Endothelial cell of umbilical vein (primary cell): ENCODE measurements at regions of chr3 and their contacts with region 1.

Region 1: DNA sequence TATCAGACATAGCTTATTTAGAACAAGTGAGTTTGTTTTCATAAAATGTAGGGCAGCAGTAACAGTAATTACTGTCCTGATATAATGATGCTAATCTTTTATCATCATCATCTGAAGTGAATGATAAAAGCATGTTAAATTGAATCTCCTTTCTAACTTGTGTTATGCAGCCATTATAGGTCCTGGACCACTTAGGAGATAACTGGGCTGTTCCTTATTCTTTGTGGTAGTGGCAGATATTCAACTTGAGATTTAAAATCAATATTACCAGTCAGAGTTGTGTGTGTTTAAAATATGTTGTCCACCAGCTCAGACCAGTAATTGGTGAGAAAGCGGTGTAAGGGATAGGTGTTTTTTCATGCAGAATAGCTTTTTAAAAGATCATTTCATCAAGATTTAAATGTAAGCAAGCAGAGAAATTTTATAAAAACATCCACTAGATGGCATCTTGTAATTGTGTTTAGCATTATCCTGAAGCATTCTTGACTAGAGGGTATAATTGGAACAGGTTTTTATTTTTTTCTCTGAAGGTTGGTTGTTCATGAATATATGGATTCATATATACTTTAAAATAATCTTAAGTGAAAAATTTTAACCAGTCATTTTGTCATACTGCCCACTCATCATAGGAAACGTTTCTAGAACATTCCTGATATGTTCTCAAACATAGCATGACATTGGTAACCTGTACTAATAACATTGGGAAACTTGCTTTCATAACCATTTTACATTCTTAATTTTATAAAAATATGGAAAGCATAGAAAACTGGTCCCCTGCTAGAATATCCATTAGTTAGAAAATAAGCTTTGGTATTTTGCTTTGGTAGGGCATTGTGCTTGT is 153.9 kb downstream of the BBX start:
- DNase-seq: peak; percentile 42
- H3K4me3 ChIP-seq: no peak overlapping the region
- H3K27ac ChIP-seq: no peak overlapping the region
- H3K4me1 ChIP-seq: no peaks in the 10 kb centered on the region
- H3K27me3 ChIP-seq: no peaks in the 10 kb centered on the region
- CTCF ChIP-seq: peak; percentile 20 to 31
- POLR2A ChIP-seq: no peak

Region 2: DNA sequence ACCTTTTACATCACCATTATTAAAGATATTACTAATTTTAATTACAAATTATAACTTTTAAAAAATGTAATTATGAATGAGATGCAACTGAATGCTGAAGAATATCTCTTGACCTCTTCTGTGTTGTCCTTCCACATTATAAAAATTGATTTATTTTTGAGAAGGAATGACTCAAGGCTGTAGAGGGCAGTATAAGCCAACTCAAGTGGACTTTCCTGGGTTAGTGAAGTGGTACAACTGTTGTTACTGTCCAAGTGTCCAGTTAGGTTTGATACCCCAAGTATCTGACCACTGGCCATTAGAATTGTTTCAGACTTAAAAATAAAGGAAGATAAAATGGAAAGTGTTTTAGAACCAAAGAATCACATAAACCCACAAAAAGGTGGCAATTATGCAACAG is 102.0 kb before region 1 on chr3:
- CTCF ChIA-PET with region 1: interaction called, 49 read pairs
- POLR2A ChIA-PET with region 1: no interaction called
- dilution Hi-C with region 1: no loop called
- intact Hi-C with region 1: loop called (anchors 5 kb)
- DNase-seq: peak; percentile 66
- H3K4me3 ChIP-seq: no peak overlapping the region
- H3K27ac ChIP-seq: no peak overlapping the region
- H3K4me1 ChIP-seq: no peaks in the 10 kb centered on the region
- H3K27me3 ChIP-seq: no peaks in the 10 kb centered on the region
- CTCF ChIP-seq: peak; percentile 33 to 46
- POLR2A ChIP-seq: no peak

Region 3: DNA sequence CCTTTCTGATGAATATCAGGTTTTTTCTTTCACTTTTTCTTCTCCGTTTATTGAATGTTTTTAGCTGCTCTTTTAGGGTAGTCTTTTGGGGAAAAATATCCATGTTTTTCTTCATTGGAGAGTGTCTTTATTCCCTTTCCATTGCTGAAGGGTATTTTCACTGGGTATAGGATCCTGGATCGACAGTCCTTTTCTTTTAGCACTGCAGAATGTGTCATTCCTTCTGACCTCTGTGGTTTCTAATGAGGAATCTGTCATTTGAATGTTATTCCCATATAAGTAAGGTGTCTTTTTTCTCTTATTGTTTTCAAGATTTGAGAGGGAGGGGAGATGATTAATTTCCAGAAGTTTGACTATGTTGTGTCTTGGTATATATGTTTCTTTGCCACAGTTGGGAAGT is 57.1 kb before region 1 on chr3:
- CTCF ChIA-PET with region 1: no interaction called
- POLR2A ChIA-PET with region 1: no interaction called
- dilution Hi-C with region 1: no loop called
- intact Hi-C with region 1: no loop called
- DNase-seq: no peak
- H3K4me3 ChIP-seq: no peak overlapping the region
- H3K27ac ChIP-seq: no peak overlapping the region
- H3K4me1 ChIP-seq: no peaks in the 10 kb centered on the region
- H3K27me3 ChIP-seq: no peaks in the 10 kb centered on the region
- CTCF ChIP-seq: no peak
- POLR2A ChIP-seq: no peak

Region 4: DNA sequence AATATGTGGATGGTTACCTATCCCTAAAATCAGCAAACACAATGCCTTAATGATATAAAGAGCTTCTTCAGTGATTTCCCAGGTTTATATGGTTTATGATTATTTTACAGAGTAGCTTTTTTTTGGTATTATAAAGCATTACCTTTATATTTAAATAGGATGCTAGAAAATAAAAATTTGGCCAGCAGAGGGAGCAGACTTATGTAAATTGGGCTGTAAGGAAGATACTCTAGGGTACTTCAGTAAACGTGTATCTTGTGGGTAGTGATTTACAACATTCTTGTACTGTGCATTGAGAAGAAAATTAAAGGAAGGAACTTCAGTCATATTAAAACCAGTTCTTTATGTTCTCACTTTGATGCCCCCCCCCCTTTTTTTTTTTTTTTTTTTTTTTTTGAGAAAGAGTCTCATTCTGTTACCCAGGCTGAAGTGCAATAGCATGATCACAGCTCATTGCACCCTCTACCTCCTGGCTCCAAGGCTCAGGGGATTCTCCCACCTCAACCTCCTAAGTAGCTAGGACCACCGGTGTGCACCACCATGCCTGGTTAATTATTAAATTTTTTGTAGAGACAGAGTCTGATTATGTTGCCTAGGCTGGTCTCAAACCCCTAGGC is 13.9 kb after region 1 on chr3:
- CTCF ChIA-PET with region 1: interaction called, 75 read pairs
- POLR2A ChIA-PET with region 1: no interaction called
- dilution Hi-C with region 1: no loop called
- intact Hi-C with region 1: no loop called
- DNase-seq: peak; percentile 51
- H3K4me3 ChIP-seq: no peak overlapping the region
- H3K27ac ChIP-seq: no peak overlapping the region
- H3K4me1 ChIP-seq: no peaks in the 10 kb centered on the region
- H3K27me3 ChIP-seq: no peaks in the 10 kb centered on the region
- CTCF ChIP-seq: peak; percentile 25 to 27
- POLR2A ChIP-seq: no peak

Region 5: DNA sequence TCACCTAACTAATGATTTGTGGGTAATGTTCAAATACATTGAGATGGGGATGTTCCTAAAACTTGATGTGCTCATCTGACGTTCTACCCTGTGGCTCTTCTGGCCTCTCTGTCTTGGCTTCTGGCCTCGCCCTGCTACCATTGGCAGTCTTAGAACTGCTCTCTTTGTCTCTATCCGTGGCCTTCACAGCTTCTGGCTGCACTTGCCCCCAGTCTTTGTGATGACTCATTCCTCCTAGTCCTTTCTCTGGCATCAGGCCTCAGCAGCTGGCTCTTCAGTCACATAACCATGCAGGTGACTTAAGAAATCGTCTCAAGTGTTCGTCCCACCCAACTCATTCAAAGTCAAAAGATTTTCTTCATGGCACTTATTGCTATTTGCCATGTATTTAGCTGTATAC is 34.2 kb after region 1 on chr3:
- CTCF ChIA-PET with region 1: interaction called, 14 read pairs
- POLR2A ChIA-PET with region 1: no interaction called
- dilution Hi-C with region 1: no loop called
- intact Hi-C with region 1: no loop called
- DNase-seq: peak; percentile 81
- H3K4me3 ChIP-seq: no peak overlapping the region
- H3K27ac ChIP-seq: no peak overlapping the region
- H3K4me1 ChIP-seq: peaks cover 11% of the 10 kb centered on the region
- H3K27me3 ChIP-seq: no peaks in the 10 kb centered on the region
- CTCF ChIP-seq: no peak
- POLR2A ChIP-seq: no peak

Region 6: GRCh38 chr3:107740992-107741896 is 64.6 kb after region 1 on chr3:
- CTCF ChIA-PET with region 1: interaction called, 268 read pairs
- POLR2A ChIA-PET with region 1: no interaction called
- dilution Hi-C with region 1: no loop called
- intact Hi-C with region 1: loop called (anchors 1 kb)
- DNase-seq: peak; percentile 59
- H3K4me3 ChIP-seq: no peak overlapping the region
- H3K27ac ChIP-seq: no peak overlapping the region
- H3K4me1 ChIP-seq: no peaks in the 10 kb centered on the region
- H3K27me3 ChIP-seq: no peaks in the 10 kb centered on the region
- CTCF ChIP-seq: peak in 1 of 2 donors; percentile 25
- POLR2A ChIP-seq: no peak

Region 7: GRCh38 chr3:107846279-107846852 is 169.7 kb after region 1 on chr3:
- CTCF ChIA-PET with region 1: interaction called, 23 read pairs
- POLR2A ChIA-PET with region 1: no interaction called
- dilution Hi-C with region 1: no loop called
- intact Hi-C with region 1: loop called (anchors 2 kb)
- DNase-seq: peak; percentile 64
- H3K4me3 ChIP-seq: no peak overlapping the region
- H3K27ac ChIP-seq: no peak overlapping the region
- H3K4me1 ChIP-seq: no peaks in the 10 kb centered on the region
- H3K27me3 ChIP-seq: peaks cover 4% of the 10 kb centered on the region in 2 experiments
- CTCF ChIP-seq: peak; percentile 54 to 79
- POLR2A ChIP-seq: no peak